ENCODE measurements at regions of chr12 and their contacts with region 1.

Region 1: GRCh38 chr12:75805905-75806304 is 225.7 kb downstream of the PHLDA1 start:
- DNase-seq: no peak
- CTCF ChIP-seq: no peak

Region 2: GRCh38 chr12:75511116-75512048 is 294.5 kb before region 1 on chr12 and contains the start of gene KRR1:
- CTCF ChIA-PET with region 1: no interaction called
- POLR2A ChIA-PET with region 1: no interaction called
- DNase-seq: peak; percentile 76
- CTCF ChIP-seq: no peak

Region 3: GRCh38 chr12:75816897-75817296 is 11.0 kb after region 1 on chr12:
- CTCF ChIA-PET with region 1: interaction called, 12 read pairs
- POLR2A ChIA-PET with region 1: no interaction called
- DNase-seq: no peak
- CTCF ChIP-seq: peak; percentile 19

Region 4: GRCh38 chr12:75877763-75878621 is 72.1 kb after region 1 on chr12:
- CTCF ChIA-PET with region 1: no interaction called
- POLR2A ChIA-PET with region 1: no interaction called
- DNase-seq: no peak
- CTCF ChIP-seq: no peak

Measured in GM10248 (cell line).